ENCODE measurements at regions of chr6 and their contacts with region 1.

Region 1: GRCh38 chr6:42038811-42039408 is 11.4 kb upstream of the TAF8 start:
- DNase-seq: no peak
- H3K4me3 Mint-ChIP-seq: peak overlapping the region; percentile 78
- H3K27ac Mint-ChIP-seq: peak overlapping the region; percentile 97
- H3K4me1 Mint-ChIP-seq: peaks cover 60% of the 10 kb centered on the region
- H3K27me3 Mint-ChIP-seq: no peaks in the 10 kb centered on the region

Region 2: DNA sequence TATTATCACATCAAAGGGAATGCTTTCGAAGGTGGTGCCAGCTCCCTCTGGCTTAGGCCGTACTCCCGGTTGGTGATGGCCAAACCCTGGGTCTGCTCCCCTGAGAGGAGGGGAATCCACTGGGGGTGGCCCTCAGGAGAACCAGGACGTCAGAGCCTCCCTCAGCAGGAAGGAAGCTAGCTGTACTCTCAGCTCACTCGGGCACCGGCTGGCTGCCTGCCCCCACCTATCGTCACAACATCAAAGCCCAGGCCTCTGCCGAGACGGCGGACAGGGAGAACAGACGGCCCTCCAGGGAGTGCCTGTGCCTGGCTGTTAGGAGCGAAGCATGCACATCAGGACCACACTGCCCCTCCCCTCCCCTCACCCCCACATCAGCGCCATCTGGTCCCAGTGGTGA is 282.6 kb before region 1 on chr6:
- intact Hi-C with region 1: no loop called
- DNase-seq: no peak
- H3K4me3 Mint-ChIP-seq: no peak overlapping the region
- H3K27ac Mint-ChIP-seq: no peak overlapping the region
- H3K4me1 Mint-ChIP-seq: no peaks in the 10 kb centered on the region
- H3K27me3 Mint-ChIP-seq: peaks cover 16% of the 10 kb centered on the region

Region 3: DNA sequence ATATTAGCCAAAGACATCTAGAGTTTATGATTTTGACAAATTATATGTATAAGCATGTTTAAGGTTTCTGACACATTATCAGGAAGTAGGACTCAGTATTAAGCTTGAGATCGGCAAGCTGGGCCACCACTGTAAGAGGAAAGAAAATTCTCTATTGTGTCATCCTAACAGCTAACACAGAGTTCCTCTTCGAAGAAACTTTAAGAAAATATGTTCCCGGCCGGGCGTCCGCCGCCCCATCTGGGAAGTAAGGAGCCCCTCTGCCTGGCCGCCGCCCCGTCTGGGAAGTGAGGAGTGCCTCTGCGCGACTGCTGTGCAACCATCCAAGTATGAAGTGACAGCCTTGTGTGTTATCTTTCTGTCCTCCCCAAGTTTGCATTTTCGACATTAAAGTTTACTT is 166.8 kb before region 1 on chr6:
- intact Hi-C with region 1: no loop called
- DNase-seq: no peak
- H3K4me3 Mint-ChIP-seq: no peak overlapping the region
- H3K27ac Mint-ChIP-seq: no peak overlapping the region
- H3K4me1 Mint-ChIP-seq: no peaks in the 10 kb centered on the region
- H3K27me3 Mint-ChIP-seq: no peaks in the 10 kb centered on the region

Region 4: DNA sequence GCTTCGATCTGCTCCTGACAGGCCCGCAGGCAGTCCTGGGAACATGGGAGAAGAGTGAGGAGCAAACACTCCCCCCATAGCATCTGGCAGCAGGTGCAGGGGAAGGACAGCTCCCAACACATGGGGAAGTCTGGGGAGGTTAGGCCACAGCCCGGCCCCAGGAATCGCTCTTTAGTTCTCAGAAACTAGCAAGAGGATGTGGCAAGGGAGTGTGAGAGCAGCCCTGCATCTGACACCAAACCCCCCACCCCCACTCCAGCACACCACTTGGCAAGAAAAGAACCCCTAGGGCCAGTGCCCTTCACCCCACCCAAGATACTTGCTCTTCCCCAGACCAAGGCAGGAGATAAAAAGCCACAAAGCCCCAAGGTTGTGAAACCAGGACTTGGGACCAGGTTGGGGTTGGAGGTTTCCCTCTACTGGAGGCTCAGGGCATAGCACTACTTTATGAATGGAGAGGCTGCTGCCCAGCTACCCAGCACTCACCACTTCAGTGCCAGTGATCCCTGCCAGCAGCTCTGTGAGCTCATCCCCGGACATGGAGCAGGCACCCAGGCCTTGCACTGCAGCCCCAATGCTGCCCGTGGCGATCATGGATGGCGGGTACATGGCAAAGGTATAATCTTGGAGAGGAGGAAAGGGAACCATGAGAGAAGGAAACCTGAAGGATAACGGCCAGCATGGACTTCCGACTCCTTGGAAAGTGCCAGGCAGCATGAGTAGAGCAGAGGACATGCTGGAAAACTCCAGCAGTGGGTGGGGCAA is 102.7 kb before region 1 on chr6:
- intact Hi-C with region 1: loop called (anchors 1 kb)
- DNase-seq: peak; percentile 96
- H3K4me3 Mint-ChIP-seq: peak overlapping the region; percentile 100
- H3K27ac Mint-ChIP-seq: peak overlapping the region; percentile 87
- H3K4me1 Mint-ChIP-seq: peaks cover 68% of the 10 kb centered on the region
- H3K27me3 Mint-ChIP-seq: no peaks in the 10 kb centered on the region

Region 5: DNA sequence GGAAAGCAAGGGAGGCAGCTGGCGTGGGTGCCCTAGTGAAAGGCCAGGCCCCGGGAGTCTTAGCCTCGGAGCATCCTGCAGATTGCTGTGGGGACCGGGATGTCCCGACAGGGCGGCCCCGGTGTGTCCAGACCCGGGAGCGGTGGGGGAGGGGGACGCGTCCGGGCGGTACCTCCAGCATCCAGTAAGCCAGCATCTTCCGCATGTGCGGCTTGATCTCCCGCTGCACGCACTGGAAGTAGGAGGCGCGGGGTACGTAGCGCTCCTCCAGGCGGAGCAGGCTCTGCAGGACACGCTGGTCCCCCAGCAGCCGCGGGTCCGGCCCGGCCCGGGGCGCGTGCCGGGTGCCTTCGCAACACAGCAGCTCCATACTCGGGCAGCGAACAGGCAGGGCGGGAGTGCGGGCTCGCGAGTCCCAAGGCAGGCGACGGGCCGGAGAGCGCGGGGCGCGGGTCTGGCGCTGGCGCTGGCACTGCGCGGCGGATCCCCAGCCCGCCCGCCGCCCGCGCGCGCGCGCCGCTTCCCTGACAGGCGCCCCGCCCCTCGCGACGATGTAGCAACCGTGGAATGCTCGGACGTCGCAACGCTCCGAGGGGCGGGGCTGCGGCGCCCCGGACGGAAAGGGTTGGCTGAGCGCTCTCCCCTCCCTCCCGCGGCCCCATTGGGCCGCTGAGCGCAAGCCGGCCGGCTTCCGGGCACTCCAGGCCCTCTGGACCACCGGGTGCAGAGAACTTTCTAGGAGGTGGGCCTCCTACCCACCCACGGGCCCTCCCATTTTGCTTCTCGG is 97.4 kb before region 1 on chr6 and contains the start of gene CCND3:
- intact Hi-C with region 1: loop called (anchors 1 kb)
- DNase-seq: peak; percentile 97
- H3K4me3 Mint-ChIP-seq: peak within 1 kb of the TSS; percentile 100
- H3K27ac Mint-ChIP-seq: peak within 1 kb of the TSS; percentile 96
- H3K4me1 Mint-ChIP-seq: peaks cover 46% of the 10 kb centered on the region
- H3K27me3 Mint-ChIP-seq: no peaks in the 10 kb centered on the region
- total RNA-seq, gene CCND3: 483 and 491 TPM in 2 replicates

Region 6: GRCh38 chr6:41970436-41970846 is 68.5 kb before region 1 on chr6:
- intact Hi-C with region 1: loop called (anchors 2 kb)
- DNase-seq: no peak
- H3K4me3 Mint-ChIP-seq: peak overlapping the region; percentile 32
- H3K27ac Mint-ChIP-seq: peak overlapping the region; percentile 90
- H3K4me1 Mint-ChIP-seq: peaks cover 36% of the 10 kb centered on the region
- H3K27me3 Mint-ChIP-seq: no peaks in the 10 kb centered on the region